ENCODE measurements at regions of chr5 and their contacts with region 1.

Region 1: GRCh38 chr5:110751902-110752762 is 13.3 kb downstream of the SLC25A46 start:
- DNase-seq: peak; percentile 53
- H3K4me3 Mint-ChIP-seq: peak overlapping the region; percentile 19
- H3K27ac Mint-ChIP-seq: peak overlapping the region; percentile 91
- H3K4me1 Mint-ChIP-seq: peaks cover 45% of the 10 kb centered on the region
- H3K27me3 Mint-ChIP-seq: no peaks in the 10 kb centered on the region

Region 2: DNA sequence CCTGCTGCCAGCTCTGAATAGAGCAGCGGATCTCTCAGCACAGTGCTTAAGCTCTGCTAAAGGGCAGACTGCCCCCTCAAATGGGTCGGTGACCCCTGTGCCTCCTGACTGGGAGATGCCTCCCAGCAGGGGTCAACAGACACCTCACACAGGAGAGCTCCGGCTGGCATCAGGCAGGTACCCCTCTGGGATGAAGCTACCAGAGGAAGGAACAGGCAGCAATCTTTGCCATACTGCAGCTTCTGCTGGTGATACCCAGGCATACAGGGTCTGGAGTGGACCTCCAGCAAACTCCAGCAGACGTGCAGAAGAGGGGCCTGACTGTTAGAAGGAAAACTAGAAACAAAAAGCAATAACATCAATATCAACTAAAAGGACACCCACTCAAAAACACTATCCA is 157.3 kb before region 1 on chr5:
- CTCF ChIA-PET with region 1: no interaction called
- intact Hi-C with region 1: no loop called
- DNase-seq: no peak
- H3K4me3 Mint-ChIP-seq: no peak overlapping the region
- H3K27ac Mint-ChIP-seq: no peak overlapping the region
- H3K4me1 Mint-ChIP-seq: no peaks in the 10 kb centered on the region
- H3K27me3 Mint-ChIP-seq: peaks cover 6% of the 10 kb centered on the region

Region 3: GRCh38 chr5:110663525-110663924 is 88.6 kb before region 1 on chr5:
- CTCF ChIA-PET with region 1: no interaction called
- intact Hi-C with region 1: no loop called
- DNase-seq: no peak
- H3K4me3 Mint-ChIP-seq: no peak overlapping the region
- H3K27ac Mint-ChIP-seq: no peak overlapping the region
- H3K4me1 Mint-ChIP-seq: peaks cover 9% of the 10 kb centered on the region
- H3K27me3 Mint-ChIP-seq: no peaks in the 10 kb centered on the region

Region 4: GRCh38 chr5:110726249-110727024 is 25.7 kb before region 1 on chr5 and contains the start of gene TMEM232:
- CTCF ChIA-PET with region 1: no interaction called
- intact Hi-C with region 1: loop called (anchors 1 kb)
- DNase-seq: peak; percentile 90
- H3K4me3 Mint-ChIP-seq: peak within 1 kb of the TSS; percentile 75
- H3K27ac Mint-ChIP-seq: no peak within 1 kb of the TSS
- H3K4me1 Mint-ChIP-seq: peaks cover 3% of the 10 kb centered on the region
- H3K27me3 Mint-ChIP-seq: no peaks in the 10 kb centered on the region
- total RNA-seq, gene TMEM232: 0.31 to 0.86 TPM

Region 5: DNA sequence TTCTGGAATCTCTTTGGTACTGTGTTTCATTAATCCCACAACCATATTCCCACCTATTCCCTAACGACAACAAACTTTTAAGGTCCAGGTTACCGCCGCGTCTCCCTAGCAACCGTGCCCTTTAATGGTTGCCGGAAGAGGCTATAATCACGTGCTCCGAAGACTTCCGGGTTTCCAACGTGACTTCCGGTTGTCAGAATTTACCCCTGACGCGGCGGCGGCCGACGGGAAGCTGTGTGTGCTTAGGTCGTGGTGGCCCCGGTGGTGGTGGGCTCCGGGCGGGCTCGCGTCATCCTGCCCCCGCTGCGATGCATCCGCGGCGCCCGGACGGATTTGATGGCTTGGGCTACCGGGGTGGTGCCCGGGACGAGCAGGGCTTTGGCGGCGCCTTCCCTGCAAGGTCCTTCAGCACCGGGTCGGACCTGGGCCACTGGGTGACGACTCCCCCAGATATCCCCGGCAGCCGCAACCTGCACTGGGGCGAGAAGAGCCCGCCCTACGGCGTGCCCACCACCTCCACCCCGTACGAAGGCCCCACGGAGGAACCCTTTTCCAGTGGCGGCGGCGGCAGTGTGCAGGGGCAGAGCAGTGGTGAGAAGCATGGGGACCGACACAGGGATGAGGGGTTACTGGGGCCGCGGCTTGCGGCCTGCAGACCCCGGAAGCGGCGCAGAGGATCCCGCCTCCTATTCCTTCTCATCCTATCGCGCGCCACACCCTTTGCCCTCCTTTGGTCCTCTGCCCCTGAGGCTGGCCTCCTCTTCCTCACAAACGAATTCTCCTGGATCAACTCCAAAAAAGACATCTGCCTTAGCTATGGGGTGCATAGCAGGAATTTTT is 13.1 kb before region 1 on chr5 and contains the start of gene SLC25A46:
- CTCF ChIA-PET with region 1: interaction called, 6 read pairs
- intact Hi-C with region 1: loop called (anchors 1 kb)
- DNase-seq: peak; percentile 89
- H3K4me3 Mint-ChIP-seq: peak within 1 kb of the TSS; percentile 96
- H3K27ac Mint-ChIP-seq: peak within 1 kb of the TSS; percentile 86
- H3K4me1 Mint-ChIP-seq: peaks cover 25% of the 10 kb centered on the region
- H3K27me3 Mint-ChIP-seq: peaks cover 8% of the 10 kb centered on the region
- total RNA-seq, gene SLC25A46: 26.1 to 27.2 TPM

Region 6: GRCh38 chr5:111072949-111073682 is 321.0 kb after region 1 on chr5:
- CTCF ChIA-PET with region 1: no interaction called
- intact Hi-C with region 1: loop called (anchors 2 kb)
- DNase-seq: peak; percentile 71
- H3K4me3 Mint-ChIP-seq: peak overlapping the region; percentile 88
- H3K27ac Mint-ChIP-seq: no peak overlapping the region
- H3K4me1 Mint-ChIP-seq: peaks cover 30% of the 10 kb centered on the region
- H3K27me3 Mint-ChIP-seq: peaks cover 61% of the 10 kb centered on the region

Region 7: DNA sequence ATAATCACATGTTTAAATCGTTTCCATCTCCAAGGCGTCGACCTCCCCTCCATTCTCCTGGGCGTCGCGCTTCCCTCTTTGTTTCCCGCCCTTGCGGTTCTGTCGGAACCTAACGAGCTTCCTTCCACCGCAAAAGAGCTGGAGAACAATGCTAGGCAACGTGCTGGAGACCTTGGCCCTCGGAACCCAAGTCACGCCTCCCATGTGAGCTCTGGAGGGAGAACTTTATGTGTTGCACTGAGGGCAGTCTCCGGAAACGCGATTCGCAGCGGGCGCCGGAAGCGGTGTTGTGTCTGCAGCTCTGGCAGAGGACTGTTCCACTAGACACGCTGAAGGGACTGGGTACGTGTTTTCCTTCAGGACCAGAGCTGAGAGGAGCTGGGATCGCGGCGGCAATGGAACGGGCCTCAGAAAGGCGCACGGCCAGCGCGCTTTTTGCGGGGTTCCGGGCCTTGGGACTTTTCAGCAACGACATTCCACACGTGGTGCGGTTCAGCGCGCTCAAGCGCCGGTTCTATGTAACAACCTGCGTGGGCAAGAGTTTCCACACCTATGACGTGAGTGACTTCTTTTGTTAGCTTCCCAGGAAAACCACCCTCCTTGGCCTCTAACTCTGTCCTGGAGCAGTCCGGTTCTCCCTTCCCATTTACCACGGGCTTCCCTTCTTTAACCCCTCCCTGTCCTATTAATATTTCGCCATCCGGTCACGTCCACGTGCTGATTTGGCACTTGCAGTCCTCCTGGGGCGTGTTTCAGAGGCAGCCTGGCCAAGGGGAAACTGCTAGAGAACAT is 340.1 kb after region 1 on chr5 and contains the start of gene WDR36:
- CTCF ChIA-PET with region 1: interaction called, 3 read pairs
- intact Hi-C with region 1: loop called (anchors 1 kb)
- DNase-seq: peak; percentile 92
- H3K4me3 Mint-ChIP-seq: peak within 1 kb of the TSS; percentile 99
- H3K27ac Mint-ChIP-seq: peak within 1 kb of the TSS; percentile 90
- H3K4me1 Mint-ChIP-seq: peaks cover 42% of the 10 kb centered on the region
- H3K27me3 Mint-ChIP-seq: peaks cover 8% of the 10 kb centered on the region
- total RNA-seq, gene WDR36: 34.1 to 40.3 TPM

Region 8: GRCh38 chr5:111237470-111237869 is 485.3 kb after region 1 on chr5:
- CTCF ChIA-PET with region 1: no interaction called
- intact Hi-C with region 1: loop called (anchors 5 kb)
- DNase-seq: no peak
- H3K4me3 Mint-ChIP-seq: peak overlapping the region; percentile 66
- H3K27ac Mint-ChIP-seq: peak overlapping the region; percentile 89
- H3K4me1 Mint-ChIP-seq: peaks cover 90% of the 10 kb centered on the region
- H3K27me3 Mint-ChIP-seq: no peaks in the 10 kb centered on the region

Region 9: DNA sequence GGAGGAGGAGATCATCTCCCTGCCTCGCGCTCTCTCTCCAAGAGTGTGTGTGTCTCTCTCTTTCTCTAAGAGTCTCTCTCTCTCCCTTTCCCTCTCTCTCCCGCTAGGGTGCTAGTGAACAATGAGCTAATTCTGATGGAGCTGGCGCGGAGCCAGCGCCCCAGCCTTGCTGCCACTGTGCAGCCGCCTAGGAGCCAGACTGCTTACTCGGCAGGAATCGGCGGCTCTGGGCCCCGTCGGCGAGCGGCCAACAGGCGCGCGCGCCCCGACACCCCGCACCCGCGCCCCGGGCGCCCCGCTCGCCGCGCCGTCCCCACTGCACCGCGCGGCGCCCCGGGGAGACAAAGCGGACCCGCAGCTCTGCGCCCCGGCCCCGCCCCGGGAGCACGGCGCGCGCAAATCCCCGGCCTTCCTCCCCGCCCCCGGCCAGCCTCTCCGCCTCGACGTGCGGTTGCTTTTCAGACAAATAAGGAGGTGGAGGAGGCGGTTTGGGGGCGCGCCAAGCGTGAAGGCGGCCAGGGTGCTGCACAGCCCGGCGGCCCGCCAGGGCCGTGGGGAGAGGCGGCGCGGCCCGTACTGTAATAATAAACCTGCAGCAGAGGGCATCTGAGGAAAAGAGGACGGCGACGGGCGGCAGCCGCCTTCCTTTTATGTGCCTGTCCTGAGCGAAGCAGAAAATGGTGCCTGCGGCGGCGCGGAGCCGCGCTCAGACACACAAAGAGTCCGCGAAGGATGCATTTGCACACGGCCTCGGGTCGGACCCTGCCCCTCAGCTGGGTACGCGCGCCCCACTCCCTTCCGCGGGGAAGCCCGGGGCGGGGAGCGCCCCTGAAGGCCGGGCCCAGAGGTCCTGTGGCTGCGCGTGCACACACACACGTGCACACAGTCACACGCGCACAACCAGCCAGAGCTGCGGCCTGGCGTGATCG is 1005.5 kb after region 1 on chr5:
- CTCF ChIA-PET with region 1: no interaction called
- intact Hi-C with region 1: loop called (anchors 1 kb)
- DNase-seq: peak; percentile 83
- H3K4me3 Mint-ChIP-seq: peak overlapping the region; percentile 85
- H3K27ac Mint-ChIP-seq: peak overlapping the region; percentile 77
- H3K4me1 Mint-ChIP-seq: peaks cover 16% of the 10 kb centered on the region
- H3K27me3 Mint-ChIP-seq: no peaks in the 10 kb centered on the region

Measured in activated naive CD4-positive, alpha-beta T cell treated with anti-CD3 and anti-CD28 coated beads for 36 hours (primary cell).